AG04449 (cell line): ENCODE measurements at regions of chr10 and their contacts with region 1.

Region 1: DNA sequence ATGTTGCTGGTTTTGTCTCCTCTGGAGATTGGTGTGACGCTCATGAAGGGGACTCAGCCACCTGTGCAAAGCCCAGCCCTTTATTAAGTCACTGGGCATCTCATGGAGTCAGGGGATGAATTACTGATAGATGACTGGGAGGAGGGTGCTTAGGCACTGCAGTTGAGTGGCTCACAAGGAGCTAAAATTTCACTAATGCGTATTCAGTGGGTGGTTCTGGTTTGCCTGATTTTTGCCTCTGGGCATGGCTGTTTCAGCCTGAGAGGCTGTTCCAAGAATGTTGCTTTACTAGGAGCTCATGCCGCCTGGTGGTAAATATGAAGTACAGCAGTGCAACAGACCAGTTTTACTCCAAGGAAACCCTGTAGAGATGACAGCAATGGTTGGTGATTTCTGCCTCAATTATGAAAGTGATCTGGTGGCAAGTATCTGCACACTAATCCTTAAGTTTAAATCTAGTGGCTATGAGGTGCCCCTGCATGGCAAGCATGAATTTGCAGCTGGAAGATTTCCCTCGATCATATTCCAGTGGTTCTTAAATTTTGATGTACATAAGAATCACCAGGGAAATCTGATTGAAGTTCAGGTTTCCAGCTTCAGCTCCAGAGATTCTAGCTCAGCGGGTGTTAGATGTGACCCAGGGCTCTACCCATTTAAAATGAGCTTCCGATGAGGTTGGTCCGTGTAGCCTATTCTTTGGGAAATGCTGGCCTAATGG is 19.9 kb downstream of the ACTA2 start:
- DNase-seq: peak; percentile 67
- H3K4me3 ChIP-seq: no peak overlapping the region
- CTCF ChIP-seq: peak; percentile 74

Region 2: DNA sequence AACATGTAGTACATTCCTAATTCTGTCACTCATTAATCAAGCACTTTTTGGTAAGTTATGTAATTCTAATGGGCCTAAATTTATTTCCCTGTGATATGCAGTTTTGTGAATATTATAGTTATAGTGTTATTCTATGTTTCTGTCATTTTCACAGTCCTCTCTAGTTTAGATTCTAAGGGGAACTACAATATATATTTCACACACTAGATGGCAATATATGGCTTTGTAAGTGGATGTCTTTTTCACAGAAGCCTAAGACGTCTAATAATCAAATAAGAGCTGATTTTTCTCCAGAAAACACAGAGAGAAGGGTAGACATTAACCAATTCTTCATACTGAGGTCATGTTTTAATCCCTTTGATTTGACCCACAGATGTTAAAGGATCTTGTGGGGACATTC is 367.6 kb before region 1 on chr10:
- CTCF ChIA-PET with region 1: interaction called, 90 read pairs
- POLR2A ChIA-PET with region 1: no interaction called
- DNase-seq: no peak
- H3K4me3 ChIP-seq: no peak overlapping the region
- CTCF ChIP-seq: peak; percentile 14

Region 3: GRCh38 chr10:88820748-88821389 is 111.8 kb before region 1 on chr10:
- CTCF ChIA-PET with region 1: interaction called, 1,009 read pairs
- POLR2A ChIA-PET with region 1: no interaction called
- DNase-seq: peak; percentile 44
- H3K4me3 ChIP-seq: no peak overlapping the region
- CTCF ChIP-seq: no peak

Region 4: DNA sequence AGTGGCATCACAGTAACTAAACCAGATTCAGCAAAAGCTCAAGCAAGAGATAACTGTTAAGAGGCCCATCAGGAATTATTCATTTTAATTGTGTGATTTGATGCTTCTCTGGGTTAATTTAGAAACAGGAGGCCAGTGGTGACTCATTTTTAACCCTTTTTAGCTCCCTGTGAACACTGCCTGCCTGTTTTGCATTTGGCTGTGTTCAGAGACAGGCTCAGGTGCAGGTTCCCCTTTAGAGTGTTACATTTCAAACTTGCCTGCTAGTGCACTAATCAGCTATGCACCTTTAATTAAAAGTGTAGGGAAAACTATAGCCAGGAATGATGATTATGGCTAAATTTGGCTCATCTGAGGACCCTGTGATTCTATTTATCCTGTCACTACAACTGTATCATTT is 46.1 kb before region 1 on chr10:
- CTCF ChIA-PET with region 1: interaction called, 35 read pairs
- POLR2A ChIA-PET with region 1: interaction called, 4 read pairs
- DNase-seq: no peak
- H3K4me3 ChIP-seq: no peak overlapping the region
- CTCF ChIP-seq: no peak

Region 5: DNA sequence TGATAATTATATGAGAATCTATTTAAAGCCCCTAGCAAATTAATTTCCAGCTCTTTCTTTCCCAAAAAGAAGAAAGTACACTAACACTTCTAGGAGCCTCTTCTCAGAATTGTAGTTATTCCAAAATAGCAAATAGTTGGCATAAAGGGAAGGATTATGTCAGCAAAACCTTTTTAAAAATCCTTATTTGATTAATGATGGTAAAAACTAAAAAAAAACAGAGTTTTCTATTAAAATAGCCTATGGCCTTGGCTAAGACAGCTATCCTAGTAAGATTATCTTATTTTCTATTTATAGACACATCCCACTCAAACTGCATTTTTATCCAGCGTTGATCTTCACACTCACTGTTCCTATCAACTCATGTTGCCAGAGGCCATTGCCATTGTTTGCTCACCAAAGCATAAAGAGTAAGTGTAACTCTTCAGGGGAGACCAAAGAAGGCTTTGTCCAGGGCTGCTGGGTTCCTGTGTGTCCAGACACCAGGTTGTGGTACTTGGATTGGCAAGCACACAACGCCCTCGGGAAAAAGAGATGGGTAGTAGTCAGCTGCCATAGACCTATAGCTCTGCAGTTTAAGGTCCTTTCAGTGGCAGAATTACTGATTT is 11.6 kb before region 1 on chr10:
- CTCF ChIA-PET with region 1: interaction called, 48 read pairs
- POLR2A ChIA-PET with region 1: no interaction called
- DNase-seq: no peak
- H3K4me3 ChIP-seq: no peak overlapping the region
- CTCF ChIP-seq: no peak

Region 6: GRCh38 chr10:89007129-89007893 is 74.6 kb after region 1 on chr10:
- CTCF ChIA-PET with region 1: interaction called, 32 read pairs
- POLR2A ChIA-PET with region 1: no interaction called
- DNase-seq: no peak
- H3K4me3 ChIP-seq: no peak overlapping the region
- CTCF ChIP-seq: no peak

Region 7: DNA sequence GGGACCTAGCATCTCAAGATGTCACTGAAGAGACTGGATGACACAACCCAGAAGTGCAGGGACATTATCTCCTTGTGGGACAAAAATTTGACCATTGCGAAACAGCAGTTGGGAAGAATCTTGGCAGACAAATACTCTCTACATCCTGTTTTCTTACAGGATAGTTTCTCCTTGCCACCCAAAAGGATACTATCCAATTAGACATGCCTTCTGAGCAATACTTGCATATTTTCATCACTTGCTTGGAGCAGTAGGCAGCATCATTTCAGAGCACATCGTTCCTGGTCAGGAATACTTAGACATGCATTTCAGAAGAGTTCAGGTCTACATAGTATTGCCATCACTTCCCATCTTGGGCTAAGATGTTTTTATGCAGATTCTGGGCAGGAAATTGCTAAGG is 114.7 kb after region 1 on chr10:
- CTCF ChIA-PET with region 1: no interaction called
- POLR2A ChIA-PET with region 1: no interaction called
- DNase-seq: no peak
- H3K4me3 ChIP-seq: no peak overlapping the region
- CTCF ChIP-seq: no peak

Region 8: GRCh38 chr10:89217057-89217990 is 284.6 kb after region 1 on chr10:
- CTCF ChIA-PET with region 1: interaction called, 66 read pairs
- POLR2A ChIA-PET with region 1: interaction called, 3 read pairs
- DNase-seq: no peak
- H3K4me3 ChIP-seq: no peak overlapping the region
- CTCF ChIP-seq: peak; percentile 45